ENCODE measurements at regions of chr15 and their contacts with region 1.

Region 1: GRCh38 chr15:83571820-83572707 is 81.9 kb upstream of the ADAMTSL3 start:
- DNase-seq: no peak
- ATAC-seq: no peak
- H3K4me3 ChIP-seq: no peak overlapping the region
- H3K4me3 Mint-ChIP-seq: no peak overlapping the region
- H3K27ac ChIP-seq: no peak overlapping the region
- H3K27ac Mint-ChIP-seq: no peak overlapping the region
- H3K4me1 ChIP-seq: no peaks in the 10 kb centered on the region
- H3K4me1 Mint-ChIP-seq: peaks cover 2% of the 10 kb centered on the region
- H3K27me3 ChIP-seq: no peaks in the 10 kb centered on the region
- H3K27me3 Mint-ChIP-seq: peaks cover 5% of the 10 kb centered on the region
- CTCF ChIP-seq: peak; percentile 52

Region 2: GRCh38 chr15:83436458-83437158 is 135.5 kb before region 1 on chr15:
- CTCF ChIA-PET with region 1: interaction called, 3 read pairs
- POLR2A ChIA-PET with region 1: no interaction called
- intact Hi-C with region 1: loop called (anchors 5 kb)
- DNase-seq: no peak
- ATAC-seq: no peak
- H3K4me3 ChIP-seq: no peak overlapping the region
- H3K4me3 Mint-ChIP-seq: no peak overlapping the region
- H3K27ac ChIP-seq: no peak overlapping the region
- H3K27ac Mint-ChIP-seq: no peak overlapping the region
- H3K4me1 ChIP-seq: no peaks in the 10 kb centered on the region
- H3K4me1 Mint-ChIP-seq: no peaks in the 10 kb centered on the region
- H3K27me3 ChIP-seq: peaks cover 0 to 7% (median 1%) of the 10 kb centered on the region in 4 experiments
- H3K27me3 Mint-ChIP-seq: peaks cover 21% of the 10 kb centered on the region
- CTCF ChIP-seq: no peak

Region 3: DNA sequence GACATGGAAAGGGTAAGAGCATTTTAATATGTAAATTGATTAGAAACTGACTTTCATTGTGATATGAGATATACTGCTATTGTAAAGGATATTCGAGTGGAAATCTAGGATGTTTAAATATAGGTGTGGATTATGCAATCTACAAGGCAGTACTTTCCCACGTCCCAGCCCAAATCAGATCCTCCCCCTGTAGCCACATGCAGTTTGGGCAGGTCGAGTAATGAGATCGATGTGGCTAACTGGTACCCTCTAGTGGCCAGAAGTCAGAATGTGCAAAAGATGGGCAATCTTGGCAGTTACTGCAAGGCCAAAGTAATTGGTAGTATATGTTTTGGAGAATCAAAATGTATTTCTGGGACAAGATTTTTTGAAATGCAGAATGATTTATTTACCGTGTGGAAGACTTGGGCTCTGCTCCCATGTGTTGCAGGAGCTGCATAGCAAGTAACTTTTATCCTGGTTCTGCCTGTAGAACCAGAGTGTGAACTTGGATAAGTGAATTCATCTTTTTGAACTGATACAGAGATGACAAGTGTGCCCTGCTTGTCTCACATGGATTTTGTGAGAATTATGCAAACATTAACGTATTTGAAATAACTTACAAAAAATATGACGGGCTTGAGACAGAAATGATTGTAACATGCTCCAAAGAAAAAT is 12.6 kb before region 1 on chr15:
- CTCF ChIA-PET with region 1: interaction called, 10 read pairs
- POLR2A ChIA-PET with region 1: no interaction called
- intact Hi-C with region 1: no loop called
- DNase-seq: peak; percentile 44
- ATAC-seq: peak; percentile 31
- H3K4me3 ChIP-seq: no peak overlapping the region
- H3K4me3 Mint-ChIP-seq: no peak overlapping the region
- H3K27ac ChIP-seq: no peak overlapping the region
- H3K27ac Mint-ChIP-seq: no peak overlapping the region
- H3K4me1 ChIP-seq: no peaks in the 10 kb centered on the region
- H3K4me1 Mint-ChIP-seq: no peaks in the 10 kb centered on the region
- H3K27me3 ChIP-seq: no peaks in the 10 kb centered on the region
- H3K27me3 Mint-ChIP-seq: peaks cover 20% of the 10 kb centered on the region
- CTCF ChIP-seq: peak; percentile 86

Region 4: GRCh38 chr15:84050076-84050475 is 478.0 kb after region 1 on chr15:
- CTCF ChIA-PET with region 1: no interaction called
- POLR2A ChIA-PET with region 1: no interaction called
- intact Hi-C with region 1: no loop called
- DNase-seq: no peak
- ATAC-seq: no peak
- H3K4me3 ChIP-seq: no peak overlapping the region
- H3K4me3 Mint-ChIP-seq: no peak overlapping the region
- H3K27ac ChIP-seq: no peak overlapping the region
- H3K27ac Mint-ChIP-seq: no peak overlapping the region
- H3K4me1 ChIP-seq: no peaks in the 10 kb centered on the region
- H3K4me1 Mint-ChIP-seq: no peaks in the 10 kb centered on the region
- H3K27me3 ChIP-seq: peaks cover 0 to 2% (median 0%) of the 10 kb centered on the region in 4 experiments
- H3K27me3 Mint-ChIP-seq: peaks cover 9% of the 10 kb centered on the region
- CTCF ChIP-seq: no peak